ENCODE measurements at regions of chr16 and their contacts with region 1.

Region 1: GRCh38 chr16:86563489-86564345 is 2.9 kb upstream of the FOXC2 start:
- DNase-seq: peak; percentile 78 to 92
- ATAC-seq: peak; percentile 99 to 100 (median 100)
- H3K4me3 ChIP-seq: no peak overlapping the region
- H3K4me3 Mint-ChIP-seq: peak overlapping the region; percentile 42
- H3K27ac ChIP-seq: no peak overlapping the region
- H3K27ac Mint-ChIP-seq: peak overlapping the region in 1 of 2 donors; percentile 35
- H3K4me1 ChIP-seq: peaks cover 12% of the 10 kb centered on the region
- H3K4me1 Mint-ChIP-seq: peaks cover 7 to 8% of the 10 kb centered on the region in 2 donors
- H3K27me3 ChIP-seq: peaks cover 33% of the 10 kb centered on the region
- H3K27me3 Mint-ChIP-seq: peaks cover 26 to 28% of the 10 kb centered on the region in 2 donors
- CTCF ChIP-seq: peak; percentile 100

Region 2: GRCh38 chr16:86761111-86762031 is 197.7 kb after region 1 on chr16:
- intact Hi-C with region 1: loop called (anchors 5 kb)
- DNase-seq: peak; percentile 40 to 52
- ATAC-seq: peak; percentile 51 to 69 (median 64)
- H3K4me3 ChIP-seq: no peak overlapping the region
- H3K4me3 Mint-ChIP-seq: no peak overlapping the region
- H3K27ac ChIP-seq: no peak overlapping the region
- H3K27ac Mint-ChIP-seq: no peak overlapping the region
- H3K4me1 ChIP-seq: no peaks in the 10 kb centered on the region
- H3K4me1 Mint-ChIP-seq: peaks cover 7 to 8% of the 10 kb centered on the region in 2 donors
- H3K27me3 ChIP-seq: no peaks in the 10 kb centered on the region
- H3K27me3 Mint-ChIP-seq: peaks cover 20 to 68% of the 10 kb centered on the region in 2 donors
- CTCF ChIP-seq: peak; percentile 76

Region 3: DNA sequence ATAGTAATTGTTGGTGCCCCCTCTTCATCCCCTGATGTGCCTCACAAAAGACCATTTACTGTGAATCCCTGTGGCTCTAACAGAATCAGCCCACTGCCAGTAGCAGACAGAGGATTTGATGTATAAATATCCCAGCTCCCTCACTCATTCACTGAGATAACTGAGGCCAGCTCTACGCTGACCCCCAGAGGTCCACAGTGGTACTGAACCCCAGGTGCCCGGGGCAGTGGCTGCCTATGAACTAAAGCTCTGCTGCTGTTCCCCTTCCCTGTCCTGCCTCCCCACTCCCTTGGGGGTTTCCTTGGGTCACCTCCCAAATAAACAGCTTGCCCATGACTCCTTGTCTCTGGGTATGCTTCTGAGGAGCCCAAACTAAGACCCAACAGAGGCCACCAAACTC is 310.4 kb after region 1 on chr16:
- intact Hi-C with region 1: loop called (anchors 1 kb)
- DNase-seq: peak; percentile 26
- ATAC-seq: peak in 2 of 3 donors; percentile 60 to 74
- H3K4me3 ChIP-seq: no peak overlapping the region
- H3K4me3 Mint-ChIP-seq: no peak overlapping the region
- H3K27ac ChIP-seq: no peak overlapping the region
- H3K27ac Mint-ChIP-seq: no peak overlapping the region
- H3K4me1 ChIP-seq: no peaks in the 10 kb centered on the region
- H3K4me1 Mint-ChIP-seq: no peaks in the 10 kb centered on the region
- H3K27me3 ChIP-seq: peaks cover 6% of the 10 kb centered on the region
- H3K27me3 Mint-ChIP-seq: peaks cover 23 to 35% of the 10 kb centered on the region in 2 donors
- CTCF ChIP-seq: peak; percentile 58

Region 4: GRCh38 chr16:87062569-87063442 is 499.1 kb after region 1 on chr16:
- intact Hi-C with region 1: loop called (anchors 5 kb)
- DNase-seq: peak in 1 of 2 donors; percentile 65
- ATAC-seq: peak; percentile 50 to 72 (median 69)
- H3K4me3 ChIP-seq: no peak overlapping the region
- H3K4me3 Mint-ChIP-seq: no peak overlapping the region
- H3K27ac ChIP-seq: no peak overlapping the region
- H3K27ac Mint-ChIP-seq: no peak overlapping the region
- H3K4me1 ChIP-seq: peaks cover 2% of the 10 kb centered on the region
- H3K4me1 Mint-ChIP-seq: peaks cover 0 to 4% of the 10 kb centered on the region in 2 donors
- H3K27me3 ChIP-seq: peaks cover 4% of the 10 kb centered on the region
- H3K27me3 Mint-ChIP-seq: peaks cover 29 to 51% of the 10 kb centered on the region in 2 donors
- CTCF ChIP-seq: peak; percentile 63

Region 5: DNA sequence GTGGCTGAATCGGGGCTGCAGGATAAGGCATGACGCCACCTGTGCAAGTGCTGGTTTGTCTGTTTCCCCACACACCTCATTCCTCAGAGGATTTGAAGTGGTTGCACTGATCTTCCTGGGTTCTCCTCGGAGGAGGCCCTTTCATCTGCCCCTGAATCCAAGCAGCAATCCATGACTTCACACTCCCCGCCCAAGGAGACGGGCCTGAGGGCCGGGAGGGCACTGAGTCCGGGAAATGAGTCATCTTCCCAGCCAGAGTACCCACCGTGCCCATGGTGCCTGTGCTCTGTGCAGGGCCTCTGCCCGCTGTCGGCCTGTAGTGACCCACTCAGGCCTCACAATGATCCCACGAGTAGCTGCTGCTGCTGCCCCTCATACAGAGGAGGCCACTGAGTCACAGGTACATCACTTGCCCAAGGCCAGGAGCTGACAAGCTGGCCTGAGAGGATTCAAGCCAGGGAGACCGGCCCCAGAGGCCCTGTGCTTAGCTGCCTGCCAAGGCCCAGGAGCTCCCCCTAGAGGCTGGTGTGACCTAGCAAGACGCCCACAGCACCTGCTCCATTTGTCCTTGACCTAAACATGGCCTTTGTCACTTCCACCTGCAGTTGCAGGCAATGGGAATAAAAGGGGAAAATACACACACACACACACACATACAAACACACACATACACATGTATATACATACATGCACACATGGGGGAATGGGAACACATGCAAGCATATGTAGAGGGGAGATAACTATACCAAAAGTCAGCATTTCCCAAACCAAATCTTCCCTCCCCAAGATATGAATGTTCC is 513.4 kb after region 1 on chr16:
- intact Hi-C with region 1: loop called (anchors 5 kb)
- DNase-seq: peak; percentile 25 to 26
- ATAC-seq: peak in 1 of 3 donors; percentile 55
- H3K4me3 ChIP-seq: no peak overlapping the region
- H3K4me3 Mint-ChIP-seq: no peak overlapping the region
- H3K27ac ChIP-seq: no peak overlapping the region
- H3K27ac Mint-ChIP-seq: no peak overlapping the region
- H3K4me1 ChIP-seq: no peaks in the 10 kb centered on the region
- H3K4me1 Mint-ChIP-seq: no peaks in the 10 kb centered on the region
- H3K27me3 ChIP-seq: no peaks in the 10 kb centered on the region
- H3K27me3 Mint-ChIP-seq: peaks cover 5 to 7% of the 10 kb centered on the region in 2 donors
- CTCF ChIP-seq: peak; percentile 22

Region 6: DNA sequence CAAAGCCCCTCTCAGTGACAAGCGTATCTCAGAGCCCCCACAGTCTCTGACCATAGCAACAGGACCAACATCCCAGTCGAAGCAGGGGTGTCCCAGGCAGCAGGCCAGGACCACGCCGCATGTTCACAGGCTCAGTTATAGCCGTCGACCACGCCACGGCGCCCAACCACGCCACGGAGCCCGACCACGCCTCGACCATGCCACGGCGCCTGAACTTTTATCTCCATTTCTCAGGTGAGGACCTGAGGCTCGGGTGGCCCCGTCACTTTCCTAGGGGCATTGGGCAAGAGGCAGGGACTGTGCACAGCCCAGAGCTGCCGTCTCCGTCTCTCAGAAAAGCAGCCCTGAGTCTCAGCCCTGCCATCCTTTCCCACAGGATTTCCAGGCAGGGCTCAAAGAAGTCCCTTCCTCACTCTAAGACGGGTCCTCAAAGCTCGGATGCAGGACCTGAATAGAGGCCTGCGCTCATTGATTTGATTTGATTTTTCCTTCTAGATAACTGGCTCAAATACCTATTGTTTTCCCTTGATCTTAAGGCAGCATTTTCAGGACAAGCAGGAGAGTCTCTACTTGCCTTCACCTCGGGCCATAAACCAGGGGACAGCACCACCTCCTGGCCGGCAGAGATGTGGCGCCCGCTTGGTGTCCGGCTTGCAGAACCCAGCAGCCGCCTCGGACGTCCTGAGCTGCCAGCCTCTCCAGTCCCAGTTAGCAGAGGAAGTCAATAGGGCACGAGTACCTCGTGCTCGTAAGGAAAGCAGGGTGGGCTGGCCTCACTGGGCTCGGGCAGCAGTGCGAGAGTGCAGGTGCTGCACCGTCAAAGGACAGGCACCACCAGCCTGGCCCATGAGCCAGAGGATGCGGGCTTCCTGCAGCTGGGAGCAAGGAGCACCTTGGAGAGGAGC is 714.7 kb after region 1 on chr16:
- intact Hi-C with region 1: loop called (anchors 1 kb)
- DNase-seq: peak; percentile 44 to 48
- ATAC-seq: peak; percentile 65 to 86 (median 68)
- H3K4me3 ChIP-seq: no peak overlapping the region
- H3K4me3 Mint-ChIP-seq: no peak overlapping the region
- H3K27ac ChIP-seq: no peak overlapping the region
- H3K27ac Mint-ChIP-seq: no peak overlapping the region
- H3K4me1 ChIP-seq: peaks cover 7% of the 10 kb centered on the region
- H3K4me1 Mint-ChIP-seq: peaks cover 16 to 21% of the 10 kb centered on the region in 2 donors
- H3K27me3 ChIP-seq: no peaks in the 10 kb centered on the region
- H3K27me3 Mint-ChIP-seq: peaks cover 15 to 16% of the 10 kb centered on the region in 2 donors
- CTCF ChIP-seq: peak; percentile 61